GM12878 (cell line): ENCODE measurements at regions of chr16 and their contacts with region 1.

Region 1: DNA sequence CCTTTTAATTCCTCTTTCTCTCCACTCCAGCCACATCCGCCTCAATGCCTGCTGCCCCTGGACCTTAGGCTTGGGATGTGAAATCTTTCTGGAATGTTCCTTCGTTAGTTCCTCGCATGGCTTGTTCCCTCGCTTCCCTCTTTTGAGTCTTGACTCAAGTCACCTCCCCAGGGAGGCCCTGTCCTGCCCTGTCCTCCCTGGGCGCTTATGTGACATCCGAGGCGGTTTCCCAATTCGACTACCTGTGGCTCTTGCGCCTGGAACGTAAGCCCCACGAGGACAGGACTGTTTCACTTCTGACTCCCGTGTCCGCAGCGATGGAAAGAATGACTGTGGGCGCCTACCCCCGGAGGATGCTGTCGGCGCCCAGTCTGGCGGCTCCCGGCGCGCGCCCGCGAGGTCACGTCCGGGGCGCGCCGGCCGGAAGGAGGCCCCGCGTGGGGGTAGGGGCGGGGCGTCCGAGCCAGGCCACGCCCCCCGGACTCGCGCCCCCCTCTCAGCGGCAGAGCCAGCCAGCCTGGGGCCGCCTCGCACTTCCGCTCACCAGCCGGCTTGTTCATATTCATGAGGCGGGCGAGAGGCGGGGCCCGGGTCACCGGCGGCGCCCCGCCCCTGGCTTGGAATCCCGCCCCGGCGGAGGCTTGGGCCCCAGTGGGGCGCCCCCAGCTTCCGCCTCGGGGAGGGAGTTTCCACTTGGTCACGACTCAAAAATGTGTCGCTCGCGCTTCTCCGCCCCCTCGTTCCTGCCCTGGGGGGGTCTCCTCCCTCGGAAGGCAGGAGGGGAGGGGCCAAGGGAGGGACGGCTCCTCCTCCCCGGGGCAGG is 8.4 kb upstream of the GLIS2 start:
- DNase-seq: peak; percentile 72
- ATAC-seq: peak; percentile 92
- H3K4me3 ChIP-seq: peak overlapping the region; percentile 94
- H3K27ac ChIP-seq: peak overlapping the region; percentile 87
- H3K4me1 ChIP-seq: peaks cover 13% of the 10 kb centered on the region
- H3K27me3 ChIP-seq: no peaks in the 10 kb centered on the region
- CTCF ChIP-seq: no peak
- EP300 ChIP-seq: no peak
- POLR2A ChIP-seq: peak; percentile 84
- RAD21 ChIP-seq: no peak

Region 2: GRCh38 chr16:4183237-4184036 is 124.0 kb before region 1 on chr16:
- CTCF ChIA-PET with region 1: no interaction called
- POLR2A ChIA-PET with region 1: no interaction called
- RAD21 ChIA-PET with region 1: no interaction called
- SMC1A ChIA-PET with region 1: no interaction called
- in situ Hi-C with region 1: no loop called
- intact Hi-C with region 1: no loop called
- DNase-seq: peak; percentile 56
- ATAC-seq: peak; percentile 96
- H3K4me3 ChIP-seq: peak overlapping the region; percentile 58
- H3K27ac ChIP-seq: peak overlapping the region; percentile 54
- H3K4me1 ChIP-seq: peaks cover 3% of the 10 kb centered on the region; the same call in 1 of the 2 replicates
- H3K27me3 ChIP-seq: peaks cover 0 to 2% of the 10 kb centered on the region in 2 experiments; a peak in 1 of 4 replicates
- CTCF ChIP-seq: no peak
- EP300 ChIP-seq: no peak; a peak in 1 of 4 replicates
- POLR2A ChIP-seq: peak; percentile 86
- RAD21 ChIP-seq: no peak

Region 3: GRCh38 chr16:4244254-4245076 is 63.0 kb before region 1 on chr16:
- CTCF ChIA-PET with region 1: no interaction called
- POLR2A ChIA-PET with region 1: no interaction called
- RAD21 ChIA-PET with region 1: no interaction called
- SMC1A ChIA-PET with region 1: no interaction called
- in situ Hi-C with region 1: no loop called
- intact Hi-C with region 1: no loop called
- DNase-seq: no peak
- ATAC-seq: no peak
- H3K4me3 ChIP-seq: no peak overlapping the region
- H3K27ac ChIP-seq: no peak overlapping the region
- H3K4me1 ChIP-seq: no peaks in the 10 kb centered on the region
- H3K27me3 ChIP-seq: no peaks in the 10 kb centered on the region
- CTCF ChIP-seq: no peak
- EP300 ChIP-seq: no peak
- POLR2A ChIP-seq: no peak
- RAD21 ChIP-seq: no peak

Region 4: GRCh38 chr16:4271176-4272066 is 36.0 kb before region 1 on chr16:
- CTCF ChIA-PET with region 1: interaction called, 6 read pairs
- POLR2A ChIA-PET with region 1: interaction called, 10 read pairs
- RAD21 ChIA-PET with region 1: interaction called, 4 read pairs
- SMC1A ChIA-PET with region 1: interaction called, 4 read pairs
- in situ Hi-C with region 1: no loop called
- intact Hi-C with region 1: loop called (anchors 5 kb)
- DNase-seq: peak; percentile 52
- ATAC-seq: peak; percentile 92
- H3K4me3 ChIP-seq: peak overlapping the region; percentile 91
- H3K27ac ChIP-seq: peak overlapping the region; percentile 84
- H3K4me1 ChIP-seq: no peaks in the 10 kb centered on the region; the same call in 1 of the 2 replicates
- H3K27me3 ChIP-seq: no peaks in the 10 kb centered on the region
- CTCF ChIP-seq: peak; percentile 4 to 23 (median 13); a peak in 1 of 6 replicates
- EP300 ChIP-seq: no peak
- POLR2A ChIP-seq: peak; percentile 76; the same call in 1 of the 2 replicates
- RAD21 ChIP-seq: no peak

Region 5: GRCh38 chr16:4338100-4338582 is 30.7 kb after region 1 on chr16:
- CTCF ChIA-PET with region 1: no interaction called
- POLR2A ChIA-PET with region 1: no interaction called
- RAD21 ChIA-PET with region 1: no interaction called
- SMC1A ChIA-PET with region 1: no interaction called
- in situ Hi-C with region 1: no loop called
- intact Hi-C with region 1: no loop called
- DNase-seq: no peak
- ATAC-seq: peak; percentile 27; the same call in 1 of the 3 replicates
- H3K4me3 ChIP-seq: no peak overlapping the region
- H3K27ac ChIP-seq: no peak overlapping the region
- H3K4me1 ChIP-seq: no peaks in the 10 kb centered on the region
- H3K27me3 ChIP-seq: no peaks in the 10 kb centered on the region
- CTCF ChIP-seq: no peak
- EP300 ChIP-seq: no peak
- POLR2A ChIP-seq: no peak
- RAD21 ChIP-seq: no peak